Mammary epithelial cell (primary cell): ENCODE measurements at regions of chr16 and their contacts with region 1.

Region 1: DNA sequence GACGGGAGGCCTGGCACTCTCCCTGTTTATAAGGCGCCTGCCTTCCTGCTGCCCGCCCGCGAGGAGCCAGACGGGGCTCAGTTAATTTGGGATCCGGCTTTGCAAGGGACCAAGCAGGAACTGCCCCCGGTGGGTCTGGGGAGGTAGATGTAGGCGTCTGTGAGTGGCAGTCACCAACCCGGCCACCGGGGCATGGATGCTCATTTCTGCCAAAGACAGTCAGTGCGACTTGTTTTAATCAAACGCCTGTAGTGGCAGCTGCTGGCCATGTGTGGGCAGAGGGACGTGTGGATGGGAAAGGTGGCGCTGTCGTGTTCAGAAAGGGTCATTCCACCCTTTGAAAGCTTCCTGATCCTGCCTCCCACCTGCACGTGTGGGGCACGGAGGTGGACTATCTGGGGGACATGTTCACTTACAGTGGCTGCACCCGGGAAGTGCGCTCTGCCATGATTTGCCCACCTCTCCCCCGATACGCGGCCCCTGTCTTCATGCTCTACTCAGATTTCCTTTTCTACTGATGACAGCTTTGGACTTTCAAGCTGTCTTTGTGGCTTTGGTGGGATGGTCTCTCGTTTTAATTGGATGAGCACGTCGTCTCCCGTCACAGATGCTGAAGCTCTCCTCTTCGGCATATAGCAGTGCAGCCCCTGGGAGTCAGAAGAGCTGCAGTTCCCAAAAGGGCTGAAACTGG is 60.3 kb upstream of the CIBAR2 start:
- DNase-seq: no peak
- H3K4me3 ChIP-seq: peak overlapping the region in 1 of 3 experiments; percentile 25
- H3K27ac ChIP-seq: no peak overlapping the region
- H3K4me1 ChIP-seq: peaks cover 52% of the 10 kb centered on the region
- H3K27me3 ChIP-seq: no peaks in the 10 kb centered on the region
- CTCF ChIP-seq: no peak

Region 2: DNA sequence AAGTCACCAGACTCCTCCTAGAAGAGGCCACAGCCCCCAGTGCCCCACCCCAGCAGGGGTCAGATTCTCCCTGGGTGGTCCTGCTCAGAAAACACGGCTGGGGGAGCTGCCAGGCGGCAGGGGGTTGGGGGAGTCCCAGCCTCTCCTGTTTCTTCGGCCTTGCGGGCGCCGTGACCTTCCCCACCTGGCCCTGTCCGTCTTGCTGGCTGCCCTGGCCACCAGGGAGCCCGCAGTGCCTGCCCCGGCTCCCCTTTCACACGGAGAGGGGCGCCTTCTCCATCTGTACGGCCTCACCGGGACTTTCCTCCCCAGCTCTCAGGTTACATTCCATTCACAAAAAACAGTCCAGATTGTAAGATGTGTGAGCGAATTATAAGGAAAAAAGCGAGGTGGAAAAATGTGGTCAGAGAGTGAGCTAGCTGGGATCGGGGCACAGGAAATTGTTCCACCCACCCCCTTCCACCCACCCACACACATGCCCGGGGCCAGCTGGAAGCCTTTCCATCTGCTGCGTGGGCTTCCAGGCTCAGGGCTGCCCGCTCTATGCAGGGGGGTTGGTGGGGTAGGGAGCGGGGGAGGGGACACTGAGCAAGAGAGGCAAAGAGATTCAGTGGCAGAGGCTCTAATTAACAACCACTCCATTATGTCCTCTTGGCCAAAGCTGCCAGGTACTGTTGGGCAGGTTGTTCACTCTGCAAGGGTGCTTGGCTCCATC is 45.7 kb before region 1 on chr16:
- CTCF ChIA-PET with region 1: no interaction called
- dilution Hi-C with region 1: no loop called
- in situ Hi-C with region 1: no loop called
- intact Hi-C with region 1: loop called (anchors 5 kb)
- DNase-seq: peak; percentile 40
- H3K4me3 ChIP-seq: no peak overlapping the region
- H3K27ac ChIP-seq: no peak overlapping the region
- H3K4me1 ChIP-seq: peaks cover 33% of the 10 kb centered on the region
- H3K27me3 ChIP-seq: no peaks in the 10 kb centered on the region
- CTCF ChIP-seq: no peak

Region 3: GRCh38 chr16:85151603-85152413 is 20.8 kb before region 1 on chr16:
- CTCF ChIA-PET with region 1: no interaction called
- dilution Hi-C with region 1: no loop called
- in situ Hi-C with region 1: no loop called
- intact Hi-C with region 1: loop called (anchors 2 kb)
- DNase-seq: peak; percentile 76
- H3K4me3 ChIP-seq: no peak overlapping the region
- H3K27ac ChIP-seq: no peak overlapping the region
- H3K4me1 ChIP-seq: peaks cover 24% of the 10 kb centered on the region
- H3K27me3 ChIP-seq: no peaks in the 10 kb centered on the region
- CTCF ChIP-seq: no peak

Region 4: GRCh38 chr16:85234310-85235204 is 62.0 kb after region 1 on chr16:
- CTCF ChIA-PET with region 1: no interaction called
- dilution Hi-C with region 1: loop called (anchors 5 kb)
- in situ Hi-C with region 1: no loop called
- intact Hi-C with region 1: no loop called
- DNase-seq: no peak
- H3K4me3 ChIP-seq: no peak overlapping the region
- H3K27ac ChIP-seq: no peak overlapping the region
- H3K4me1 ChIP-seq: peaks cover 6% of the 10 kb centered on the region
- H3K27me3 ChIP-seq: no peaks in the 10 kb centered on the region
- CTCF ChIP-seq: no peak